Posterior vena cava (tissue), 2 donors: ENCODE measurements at regions of chr18 and their contacts with region 1.

Region 1: GRCh38 chr18:46173393-46174341 is 69.5 kb downstream of the HAUS1 start:
- DNase-seq: peak; percentile 98

Region 2: GRCh38 chr18:44765456-44765855 is 1408.2 kb before region 1 on chr18:
- intact Hi-C with region 1: loop called in 1 of 2 experiments (anchors 5 kb)
- DNase-seq: no peak